ENCODE measurements at regions of chr11 and their contacts with region 1.

Region 1: DNA sequence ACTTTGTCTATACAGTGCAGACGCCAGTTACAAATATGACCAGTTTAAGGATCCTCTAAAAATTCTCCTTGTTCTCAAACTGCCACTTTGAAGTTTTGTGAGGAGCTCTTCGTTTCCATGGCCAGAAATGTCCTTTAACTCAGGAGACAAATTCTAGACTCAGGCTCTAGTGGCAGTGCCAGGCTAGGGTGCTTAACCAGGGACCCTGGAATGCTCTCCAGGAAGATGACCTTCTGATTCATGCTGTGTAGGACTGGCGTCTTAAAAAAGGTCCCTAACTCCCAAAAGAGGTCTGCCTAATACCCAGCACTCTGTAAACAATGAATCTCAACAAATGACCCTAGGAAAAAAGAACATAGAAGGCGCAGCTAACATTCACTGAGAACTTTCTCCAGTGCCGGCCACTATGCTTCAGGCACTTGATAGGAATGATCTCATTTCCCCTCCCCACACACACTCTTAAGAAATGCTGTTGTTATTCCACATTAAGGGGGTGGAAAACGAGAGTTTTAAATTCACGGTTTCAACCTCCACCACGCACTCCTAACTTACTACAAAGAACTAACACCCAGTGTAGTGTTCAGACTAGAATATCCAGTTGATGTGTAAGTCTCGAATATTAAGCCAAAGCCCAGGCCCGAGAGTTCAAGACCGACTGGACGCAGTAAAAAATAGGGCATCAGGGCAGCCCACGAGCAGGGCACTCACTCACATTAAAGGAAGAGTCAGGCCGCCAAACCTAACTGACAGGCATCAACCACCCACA is 747 bp downstream of the NXF1 start:
- DNase-seq: peak in 1 of 3 donors; percentile 7
- ATAC-seq: peak in 1 of 2 donors; percentile 1
- H3K4me3 ChIP-seq: peak overlapping the region; percentile 79
- H3K27ac ChIP-seq: peak overlapping the region; percentile 91
- H3K4me1 ChIP-seq: peaks cover 3% of the 10 kb centered on the region
- H3K27me3 ChIP-seq: no peaks in the 10 kb centered on the region

Region 2: DNA sequence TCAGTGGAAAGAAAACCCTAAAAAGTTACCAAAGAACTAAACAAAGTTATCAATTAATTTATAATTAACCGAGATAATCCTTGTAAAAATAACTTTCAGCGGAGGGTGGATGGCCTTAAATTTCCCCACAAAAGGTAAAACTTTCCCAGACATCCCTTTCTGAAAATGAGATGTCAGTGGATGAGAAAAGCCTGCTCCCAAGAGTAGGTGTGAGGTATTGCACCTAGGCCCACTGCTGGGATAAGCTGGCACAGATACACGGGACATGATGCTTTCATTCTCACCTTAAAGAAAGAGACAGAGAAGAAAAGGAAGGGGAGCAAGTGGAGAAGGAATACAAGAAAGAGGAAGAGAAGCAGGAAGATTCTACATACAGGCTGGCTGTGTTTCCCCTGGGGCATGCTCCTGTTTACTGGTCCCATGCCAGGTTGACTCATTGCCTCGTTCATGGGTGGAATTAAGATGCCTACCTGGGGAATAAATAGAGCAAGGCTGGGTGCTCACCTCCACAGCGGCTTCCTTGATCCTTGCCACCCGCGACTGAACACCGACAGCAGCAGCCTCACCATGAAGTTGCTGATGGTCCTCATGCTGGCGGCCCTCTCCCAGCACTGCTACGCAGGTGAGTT is 534.7 kb before region 1 on chr11 and contains the start of gene SCGB2A2:
- intact Hi-C with region 1: no loop called
- DNase-seq: no peak
- ATAC-seq: no peak
- H3K4me3 ChIP-seq: no peak within 1 kb of the TSS
- H3K27ac ChIP-seq: no peak within 1 kb of the TSS
- H3K4me1 ChIP-seq: no peaks in the 10 kb centered on the region
- H3K27me3 ChIP-seq: no peaks in the 10 kb centered on the region
- total RNA-seq, gene SCGB2A2: not detected

Region 3: GRCh38 chr11:62839050-62839945 is 34.8 kb after region 1 on chr11 and contains the start of gene WDR74:
- intact Hi-C with region 1: loop called in 1 of 4 experiments (anchors 5 kb)
- DNase-seq: peak; percentile 93 to 97 (median 97)
- ATAC-seq: peak; percentile 78 to 82
- H3K4me3 ChIP-seq: peak within 1 kb of the TSS; percentile 92
- H3K27ac ChIP-seq: peak within 1 kb of the TSS; percentile 99
- H3K4me1 ChIP-seq: no peaks in the 10 kb centered on the region
- H3K27me3 ChIP-seq: no peaks in the 10 kb centered on the region
- total RNA-seq, gene WDR74: 24.8 to 28.7 (median 26.6) TPM

Measured in right cardiac atrium (tissue), 5 donors.